ENCODE measurements at regions of chr11 and their contacts with region 1.

Region 1: DNA sequence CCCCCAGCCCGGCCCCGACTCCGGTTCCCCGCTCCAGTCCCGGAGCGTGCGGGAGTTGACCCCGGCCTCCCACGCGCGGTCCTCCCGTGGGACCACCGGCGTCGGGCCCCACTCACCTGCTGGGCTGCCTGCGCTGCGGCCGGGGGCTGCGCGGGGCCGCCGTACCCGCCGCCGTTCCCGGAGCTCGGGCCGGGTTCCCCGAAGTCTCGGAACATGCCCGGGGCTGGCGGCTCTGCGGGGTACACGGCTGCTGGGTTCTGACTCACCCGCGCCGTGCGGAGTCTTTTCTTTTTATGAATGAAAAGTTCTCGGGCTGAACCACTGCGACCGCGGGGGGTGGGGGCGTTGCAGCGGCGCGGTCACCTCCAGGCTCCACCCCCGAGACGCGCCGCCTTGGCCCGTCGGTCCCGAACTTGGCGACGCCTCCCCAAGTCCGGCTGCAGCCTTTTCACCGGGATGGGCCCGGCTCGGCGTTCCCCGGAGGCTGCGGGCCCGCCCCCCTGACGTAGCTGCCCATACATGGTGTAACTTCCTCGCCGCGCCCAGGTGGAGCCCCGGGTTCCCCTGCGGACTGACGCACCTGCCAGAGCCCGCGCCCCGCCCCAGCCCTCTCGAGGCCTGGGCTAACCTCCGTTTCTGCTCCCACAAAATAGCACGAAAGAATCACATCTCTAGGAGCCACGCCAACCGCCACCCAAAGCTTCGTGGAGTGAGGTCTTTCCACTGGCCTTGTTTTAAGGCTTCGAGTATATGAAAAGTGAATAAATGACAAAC is at the start of gene FOSL1:
- DNase-seq: peak; percentile 97
- H3K4me3 Mint-ChIP-seq: peak within 1 kb of the TSS; percentile 96
- H3K27ac Mint-ChIP-seq: peak within 1 kb of the TSS; percentile 89
- H3K4me1 Mint-ChIP-seq: peaks cover 56% of the 10 kb centered on the region
- H3K27me3 Mint-ChIP-seq: no peaks in the 10 kb centered on the region
- CTCF ChIP-seq: no peak
- total RNA-seq, gene FOSL1: 95.3 and 124 TPM in 2 replicates

Region 2: GRCh38 chr11:65911682-65912568 is 11.6 kb after region 1 on chr11:
- CTCF ChIA-PET with region 1: interaction called, 10 read pairs
- POLR2A ChIA-PET with region 1: interaction called, 122 read pairs
- intact Hi-C with region 1: loop called (anchors 2 kb)
- DNase-seq: peak; percentile 90
- H3K4me3 Mint-ChIP-seq: no peak overlapping the region
- H3K27ac Mint-ChIP-seq: no peak overlapping the region
- H3K4me1 Mint-ChIP-seq: peaks cover 33% of the 10 kb centered on the region
- H3K27me3 Mint-ChIP-seq: no peaks in the 10 kb centered on the region
- CTCF ChIP-seq: peak; percentile 27

Region 3: DNA sequence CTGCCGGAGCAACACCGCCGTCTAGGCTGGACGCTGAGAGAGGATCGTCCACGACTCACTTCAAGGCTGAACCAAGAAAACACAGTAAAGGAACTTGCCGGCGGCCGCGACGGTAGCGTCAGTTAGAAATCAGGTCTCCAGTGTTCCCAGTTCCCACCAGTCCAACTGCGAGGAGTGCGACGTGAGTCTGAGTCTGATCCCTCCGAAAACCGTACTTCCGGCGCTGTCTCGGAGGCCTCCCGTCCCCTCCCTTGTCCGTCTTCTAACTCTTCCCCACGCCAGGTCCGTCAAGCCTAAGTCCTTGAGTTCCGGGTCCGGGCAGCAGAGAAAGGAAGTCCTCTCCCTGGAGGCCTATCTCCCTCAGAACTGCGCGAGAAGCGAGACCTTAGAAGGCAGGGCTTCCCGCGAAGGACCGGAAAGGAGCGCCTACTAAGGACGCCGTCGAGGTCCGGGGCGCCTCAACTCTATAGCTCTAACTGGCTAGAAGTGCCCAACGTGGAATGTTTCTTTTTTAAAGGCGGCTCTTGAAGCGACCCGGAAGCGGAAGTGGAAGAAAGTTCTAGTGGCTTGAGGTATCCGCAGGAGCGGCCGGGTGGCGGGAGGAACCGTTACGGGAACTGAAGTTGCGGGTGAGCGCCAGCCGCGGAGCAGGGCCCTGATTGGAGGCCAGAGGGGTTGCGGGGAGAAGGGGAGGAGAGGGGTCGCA is 101.8 kb after region 1 on chr11 and contains the starts of genes BANF1 and EIF1AD:
- CTCF ChIA-PET with region 1: interaction called, 4 read pairs
- POLR2A ChIA-PET with region 1: interaction called, 17 read pairs
- intact Hi-C with region 1: no loop called
- DNase-seq: peak; percentile 99
- H3K4me3 Mint-ChIP-seq: peak within 1 kb of the TSS; percentile 97
- H3K27ac Mint-ChIP-seq: peak within 1 kb of the TSS; percentile 96
- H3K4me1 Mint-ChIP-seq: no peaks in the 10 kb centered on the region
- H3K27me3 Mint-ChIP-seq: no peaks in the 10 kb centered on the region
- CTCF ChIP-seq: no peak
- total RNA-seq, gene BANF1: 154 and 198 TPM in 2 replicates
- total RNA-seq, gene EIF1AD: 21.7 and 33.5 TPM in 2 replicates